ENCODE measurements at regions of chr1 and their contacts with region 1.

Region 1: DNA sequence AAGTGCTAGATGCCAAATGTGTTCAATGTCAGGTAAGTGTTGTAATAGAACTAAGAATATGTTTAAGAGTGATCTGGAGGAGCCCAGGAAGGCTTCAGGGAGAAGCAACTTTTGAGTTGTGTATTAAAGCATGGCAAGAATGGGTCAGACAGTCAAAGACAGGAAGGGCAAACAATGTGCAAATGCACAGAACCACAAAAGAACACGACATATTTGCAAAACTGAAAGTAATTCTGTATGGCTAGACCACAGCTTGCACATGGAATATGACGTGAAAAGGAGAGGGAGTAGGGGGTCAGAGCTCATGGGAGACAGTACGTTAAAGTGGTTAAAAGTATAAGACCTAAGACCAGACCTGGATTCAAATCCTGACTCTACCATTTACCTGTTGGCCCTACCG is 7.1 kb upstream of the SORT1 start:
- DNase-seq: no peak
- H3K4me3 ChIP-seq: no peak overlapping the region
- H3K27ac ChIP-seq: no peak overlapping the region
- H3K4me1 ChIP-seq: peaks cover 10% of the 10 kb centered on the region
- H3K27me3 ChIP-seq: no peaks in the 10 kb centered on the region
- CTCF ChIP-seq: no peak

Region 2: DNA sequence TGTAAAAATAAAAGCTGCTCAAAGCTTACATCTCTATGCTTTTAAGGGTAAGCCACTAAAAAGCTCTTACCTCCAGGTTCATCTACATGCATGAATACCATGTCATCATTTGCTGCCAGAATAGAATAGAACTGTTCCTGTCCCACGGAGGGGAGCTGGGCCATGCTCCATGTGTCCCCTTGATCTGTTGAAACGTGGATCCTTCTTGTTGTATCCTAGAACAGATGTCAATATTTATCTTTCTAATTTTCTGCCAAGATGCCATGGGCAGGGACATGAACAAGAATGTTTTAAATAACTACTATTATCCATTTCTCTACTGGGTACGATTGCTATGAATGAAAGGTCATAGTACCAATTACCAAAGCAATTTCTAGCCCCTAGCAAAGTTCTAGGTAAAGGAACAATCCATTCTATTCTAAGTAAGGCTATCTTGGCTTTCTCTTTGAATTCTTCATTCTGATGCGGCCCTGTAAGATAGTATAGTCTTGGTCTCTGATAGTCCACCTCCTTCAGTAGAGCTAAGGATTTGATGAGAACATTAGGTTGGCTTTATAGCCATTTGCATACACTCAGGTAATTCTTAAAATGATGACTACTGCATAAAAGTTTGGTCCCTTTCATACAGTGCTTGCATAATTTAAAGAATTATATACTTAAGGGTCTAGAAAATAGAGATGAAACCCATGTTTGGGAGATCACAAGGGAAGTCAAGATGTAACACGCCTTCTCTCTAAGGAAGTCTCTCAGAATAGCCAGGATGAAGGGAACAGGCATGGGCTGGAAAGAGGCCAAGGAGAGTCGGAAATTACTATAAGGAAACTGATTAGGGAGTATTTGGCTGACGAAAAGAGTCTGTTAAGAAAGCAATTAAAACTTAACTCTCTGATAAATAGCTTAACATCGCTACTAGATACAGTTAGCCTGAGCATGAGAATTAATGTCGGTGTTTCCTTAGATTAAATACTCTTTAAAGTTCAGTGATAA is 62.6 kb before region 1 on chr1:
- intact Hi-C with region 1: loop called (anchors 5 kb)
- DNase-seq: no peak
- H3K4me3 ChIP-seq: no peak overlapping the region
- H3K27ac ChIP-seq: no peak overlapping the region
- H3K4me1 ChIP-seq: peaks cover 16% of the 10 kb centered on the region
- H3K27me3 ChIP-seq: no peaks in the 10 kb centered on the region
- CTCF ChIP-seq: no peak